PC-9 (cell line): ENCODE measurements at regions of chr1 and their contacts with region 1.

Region 1: GRCh38 chr1:211514030-211514754 is 22.2 kb upstream of the RD3 start:
- DNase-seq: peak; percentile 78 to 90
- H3K4me3 ChIP-seq: no peak overlapping the region
- H3K27ac ChIP-seq: peak overlapping the region; percentile 63
- H3K4me1 ChIP-seq: peaks cover 41% of the 10 kb centered on the region
- H3K27me3 ChIP-seq: no peaks in the 10 kb centered on the region
- CTCF ChIP-seq: peak; percentile 84

Region 2: DNA sequence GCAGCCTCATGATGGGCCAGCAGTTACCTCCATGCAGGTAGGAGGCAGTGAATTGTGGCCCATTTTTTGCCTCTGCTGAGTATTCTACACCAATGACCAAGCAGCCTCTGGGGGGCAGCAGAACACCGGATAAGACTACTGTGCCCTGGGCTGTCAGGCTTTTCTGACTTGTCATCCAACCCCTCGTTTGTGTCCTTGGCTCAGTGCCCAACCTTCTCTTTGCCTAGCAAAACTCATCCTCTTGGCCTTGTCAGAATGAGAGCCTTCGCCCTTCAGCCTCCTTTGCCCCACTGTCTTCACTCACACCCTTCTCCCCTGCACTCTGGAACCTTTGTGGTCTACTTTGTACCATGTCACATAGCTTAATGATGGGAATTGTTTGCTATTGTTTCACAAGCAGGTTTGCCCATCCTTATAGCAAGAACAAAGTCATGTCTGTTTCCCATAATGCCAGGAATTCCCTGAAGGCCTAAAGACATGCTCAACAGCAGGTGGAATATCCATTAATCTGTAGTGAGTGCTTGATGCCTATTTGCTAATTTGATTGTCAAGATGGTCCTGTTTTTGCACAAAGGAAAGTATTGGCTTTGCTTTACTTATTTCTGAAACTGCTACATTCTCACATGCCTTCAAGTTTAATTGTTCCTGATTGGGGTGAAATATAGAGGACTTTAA is 929.6 kb before region 1 on chr1:
- CTCF ChIA-PET with region 1: no interaction called
- POLR2A ChIA-PET with region 1: no interaction called
- intact Hi-C with region 1: loop called (anchors 10 kb)
- DNase-seq: peak; percentile 64 to 79
- H3K4me3 ChIP-seq: no peak overlapping the region
- H3K27ac ChIP-seq: no peak overlapping the region
- H3K4me1 ChIP-seq: no peaks in the 10 kb centered on the region
- H3K27me3 ChIP-seq: no peaks in the 10 kb centered on the region
- CTCF ChIP-seq: peak; percentile 88

Region 3: GRCh38 chr1:211229365-211229759 is 284.8 kb before region 1 on chr1:
- CTCF ChIA-PET with region 1: no interaction called
- POLR2A ChIA-PET with region 1: no interaction called
- intact Hi-C with region 1: no loop called
- DNase-seq: no peak
- H3K4me3 ChIP-seq: no peak overlapping the region
- H3K27ac ChIP-seq: no peak overlapping the region
- H3K4me1 ChIP-seq: no peaks in the 10 kb centered on the region
- H3K27me3 ChIP-seq: no peaks in the 10 kb centered on the region
- CTCF ChIP-seq: no peak

Region 4: DNA sequence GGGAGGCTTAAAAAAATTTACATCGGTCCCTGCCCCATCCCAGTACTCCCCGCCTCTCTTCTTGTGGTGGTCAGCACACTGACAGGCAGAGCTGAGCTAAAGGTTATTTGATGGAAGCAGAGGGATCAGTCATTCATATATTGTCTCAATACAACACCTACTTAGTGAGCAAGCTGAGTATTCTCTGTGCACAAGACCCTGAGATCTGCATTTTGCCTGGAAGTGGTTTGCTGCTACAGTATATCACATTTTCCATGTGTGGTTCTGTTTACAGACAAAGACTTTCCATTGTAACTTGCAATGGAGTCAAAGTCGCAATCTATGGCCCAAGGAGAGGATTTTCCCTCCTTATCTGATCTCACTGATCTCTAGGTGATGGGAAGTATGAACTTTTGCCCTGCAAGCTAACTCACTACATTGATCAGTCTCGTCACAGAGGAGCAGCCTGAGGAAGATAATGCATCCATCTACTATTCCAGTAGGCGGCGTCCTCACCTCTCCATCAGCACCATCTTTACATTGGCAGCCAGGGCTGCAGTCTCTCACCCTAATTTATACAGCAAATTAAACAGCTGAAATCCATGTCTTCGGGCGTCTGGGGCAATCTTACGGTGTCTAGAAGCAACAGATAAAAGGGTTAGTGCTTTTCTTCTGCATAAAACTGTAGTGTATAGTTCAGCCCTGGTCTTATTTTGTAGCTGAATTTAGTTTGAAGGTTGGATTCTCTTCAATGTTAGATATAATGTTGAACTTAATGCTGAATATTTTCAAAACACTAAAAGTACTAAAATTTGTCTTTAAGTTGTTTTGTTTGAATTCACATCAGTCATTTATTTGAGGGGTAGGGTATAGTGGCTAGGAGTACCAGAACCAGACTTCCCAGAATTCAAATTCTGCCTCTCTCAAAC is 190.8 kb before region 1 on chr1:
- CTCF ChIA-PET with region 1: interaction called, 8 read pairs
- POLR2A ChIA-PET with region 1: interaction called, 5 read pairs
- intact Hi-C with region 1: loop called (anchors 1 kb)
- DNase-seq: peak in 1 of 2 experiments; percentile 59
- H3K4me3 ChIP-seq: no peak overlapping the region
- H3K27ac ChIP-seq: no peak overlapping the region
- H3K4me1 ChIP-seq: peaks cover 9% of the 10 kb centered on the region
- H3K27me3 ChIP-seq: no peaks in the 10 kb centered on the region
- CTCF ChIP-seq: peak; percentile 89

Region 5: DNA sequence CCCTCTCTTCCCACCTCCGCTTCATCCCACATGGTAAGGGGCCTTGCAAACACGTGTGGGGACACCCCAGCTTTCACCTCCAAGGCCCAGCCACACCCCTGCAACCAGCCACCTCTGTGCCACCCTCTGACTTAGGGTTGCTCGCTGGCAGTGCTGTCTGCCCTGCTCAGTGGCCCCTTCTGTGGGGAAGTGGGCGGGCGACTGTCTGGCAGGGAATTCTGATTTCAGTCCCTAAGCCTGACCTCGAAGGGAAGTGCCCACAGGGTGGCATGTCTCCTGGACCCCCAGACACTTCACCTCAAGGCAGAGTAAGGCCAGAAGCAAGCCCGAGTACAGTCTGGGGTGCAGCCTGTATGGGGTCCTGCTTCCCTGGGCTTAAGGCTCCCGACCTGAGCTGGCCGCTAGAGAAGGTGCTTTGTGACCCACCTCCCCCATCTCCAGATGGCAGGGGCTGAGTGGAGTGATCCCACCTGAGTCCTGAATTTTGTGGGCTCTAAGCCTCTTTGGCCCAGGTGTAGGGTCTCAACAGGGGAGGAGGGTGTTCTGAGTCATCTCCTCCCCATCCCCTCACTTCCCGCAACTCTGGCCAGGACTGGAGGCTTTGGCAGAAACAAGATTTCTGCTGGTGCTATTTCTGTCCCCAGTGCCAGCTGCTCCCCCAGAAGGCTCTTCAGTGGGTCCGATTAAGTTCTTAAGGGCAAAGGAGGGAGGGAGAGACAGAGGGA is 29.3 kb before region 1 on chr1:
- CTCF ChIA-PET with region 1: interaction called, 4 read pairs
- POLR2A ChIA-PET with region 1: no interaction called
- intact Hi-C with region 1: loop called (anchors 1 kb)
- DNase-seq: no peak
- H3K4me3 ChIP-seq: no peak overlapping the region
- H3K27ac ChIP-seq: no peak overlapping the region
- H3K4me1 ChIP-seq: peaks cover 11% of the 10 kb centered on the region
- H3K27me3 ChIP-seq: no peaks in the 10 kb centered on the region
- CTCF ChIP-seq: no peak

Region 6: DNA sequence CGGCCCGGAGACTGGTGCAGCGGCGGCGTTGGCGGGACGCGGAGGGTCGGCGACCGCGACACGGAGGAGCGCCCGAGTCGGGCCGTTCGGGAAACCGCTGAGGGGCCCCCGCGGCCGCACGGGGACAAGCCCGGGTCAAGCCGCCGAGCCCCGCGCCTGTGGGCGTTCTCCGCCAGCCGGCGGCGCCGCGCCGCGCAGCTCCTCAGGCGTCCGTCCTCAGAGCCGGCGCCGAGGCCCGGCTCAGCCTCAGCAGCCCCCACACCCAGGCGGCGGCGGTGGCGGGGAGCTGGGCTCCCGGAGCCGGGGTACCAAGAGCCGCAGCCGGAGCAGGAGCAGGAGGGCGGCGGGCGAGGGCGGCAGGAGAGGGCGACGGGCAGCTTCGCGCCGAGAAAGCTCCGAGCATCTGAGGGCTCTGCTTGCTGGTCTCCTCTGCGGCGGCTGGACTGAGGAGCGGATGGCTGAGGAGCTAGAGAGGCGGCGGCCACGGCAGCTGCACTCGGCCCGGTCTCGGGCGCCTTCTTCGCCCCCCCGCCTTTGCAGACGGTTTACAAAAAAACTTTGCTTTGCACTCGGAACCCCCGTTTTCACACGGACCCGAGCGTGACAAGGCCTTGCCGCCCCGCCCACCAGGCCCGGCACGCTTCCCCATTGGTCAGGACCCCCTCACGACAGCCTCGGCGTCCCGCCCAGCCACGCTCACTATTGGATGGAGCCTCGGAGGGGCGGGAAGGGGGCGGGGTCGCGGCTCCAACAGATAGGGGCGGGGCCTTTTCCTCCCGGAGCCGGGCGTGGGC is 64.6 kb after region 1 on chr1 and contains the start of gene SLC30A1:
- CTCF ChIA-PET with region 1: no interaction called
- POLR2A ChIA-PET with region 1: interaction called, 13 read pairs
- intact Hi-C with region 1: loop called (anchors 1 kb)
- DNase-seq: peak; percentile 89 to 99
- H3K4me3 ChIP-seq: peak within 1 kb of the TSS; percentile 77
- H3K27ac ChIP-seq: peak within 1 kb of the TSS; percentile 67
- H3K4me1 ChIP-seq: peaks cover 36% of the 10 kb centered on the region
- H3K27me3 ChIP-seq: no peaks in the 10 kb centered on the region
- CTCF ChIP-seq: no peak
- total RNA-seq, gene SLC30A1: 26.8 and 27.6 TPM in 2 replicates

Region 7: DNA sequence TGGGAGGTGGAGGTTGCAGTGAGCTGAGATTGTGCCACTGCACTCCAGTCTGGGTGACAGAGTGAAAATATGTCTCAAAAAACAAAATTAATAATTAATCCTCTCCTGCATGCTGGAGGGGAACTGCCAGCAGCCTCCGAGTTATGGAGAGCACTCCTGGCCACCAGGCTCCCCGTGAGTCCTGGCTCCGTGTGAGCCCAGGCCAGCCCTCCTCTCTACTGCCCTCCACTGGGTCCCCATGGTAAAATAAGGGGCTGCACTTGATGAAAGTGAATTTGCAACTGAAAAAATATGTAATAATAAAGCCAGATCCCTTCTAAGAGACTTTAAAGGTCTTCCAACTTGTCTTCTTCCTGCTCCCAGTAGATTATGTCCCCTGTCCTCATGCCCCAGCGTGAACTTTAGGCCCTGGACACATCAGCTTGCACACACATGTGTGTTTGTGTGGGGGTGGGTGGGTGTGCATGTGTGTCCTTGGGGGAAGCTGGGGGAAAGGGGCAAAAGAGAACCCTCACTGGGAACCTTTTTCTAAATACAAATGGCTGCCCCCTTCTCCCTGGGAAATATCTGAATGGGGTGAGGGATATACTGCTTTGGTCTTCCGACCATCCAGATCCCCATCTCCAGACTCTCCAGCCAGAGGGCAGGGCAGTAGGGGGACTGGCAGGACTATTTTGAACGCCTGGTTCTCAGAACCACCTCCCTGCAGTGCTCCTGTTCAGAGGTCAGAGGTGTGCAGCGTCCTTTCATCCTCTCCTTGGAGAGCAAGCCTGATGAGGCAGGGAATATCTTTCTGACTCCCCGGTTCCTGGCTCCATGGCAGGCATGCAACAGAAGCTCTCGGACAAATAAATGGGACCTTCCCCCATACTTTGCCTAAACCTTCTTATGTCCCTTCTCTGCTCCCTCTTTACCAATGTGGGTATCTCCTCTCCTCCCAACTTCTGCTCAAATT is 135.1 kb after region 1 on chr1:
- CTCF ChIA-PET with region 1: interaction called, 4 read pairs
- POLR2A ChIA-PET with region 1: interaction called, 9 read pairs
- intact Hi-C with region 1: loop called (anchors 1 kb)
- DNase-seq: peak in 1 of 2 experiments; percentile 44
- H3K4me3 ChIP-seq: no peak overlapping the region
- H3K27ac ChIP-seq: peak overlapping the region; percentile 90
- H3K4me1 ChIP-seq: peaks cover 83% of the 10 kb centered on the region
- H3K27me3 ChIP-seq: no peaks in the 10 kb centered on the region
- CTCF ChIP-seq: peak; percentile 55